Dendritic cell treated with granulocyte-macrophage colony-stimulating factor and Interleukin-4, amounts not matched to agents 40 ng/mL and 50 ng/mL, for 4 days (primary cell): ENCODE measurements at regions of chr2 and their contacts with region 1.

Region 1: DNA sequence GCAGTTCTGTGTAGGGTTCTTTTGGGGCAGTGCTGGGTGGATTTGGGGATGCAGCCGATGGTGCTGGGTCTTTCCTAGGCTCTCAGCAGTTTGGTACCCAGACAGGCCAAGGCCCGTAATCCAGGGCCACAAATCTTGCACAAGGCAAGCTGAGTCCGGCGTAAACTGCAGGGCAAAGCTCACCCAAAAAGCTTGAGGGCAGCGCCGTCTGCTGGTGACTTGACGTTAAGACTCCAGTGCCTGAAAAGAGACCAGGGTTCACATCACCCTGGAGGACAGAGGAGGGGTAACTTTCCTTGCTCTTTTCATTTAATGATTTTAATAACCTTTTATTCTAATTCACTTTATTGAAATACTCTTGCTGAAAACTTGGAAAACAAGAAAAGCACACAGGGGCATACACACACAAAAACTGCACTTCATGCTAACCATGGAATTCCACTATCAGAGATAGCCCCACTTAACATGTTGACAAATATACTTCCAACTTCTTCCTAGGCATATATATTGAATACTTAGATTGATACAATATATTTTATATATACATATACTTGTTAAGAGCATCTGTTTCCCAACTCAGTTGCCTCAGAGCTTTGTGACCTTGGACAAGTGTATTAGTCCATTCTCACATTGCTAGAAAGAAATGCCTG is 38.9 kb downstream of the CNGA3 start:
- H3K4me3 Mint-ChIP-seq: peak overlapping the region; percentile 38
- H3K27ac Mint-ChIP-seq: no peak overlapping the region
- H3K4me1 Mint-ChIP-seq: peaks cover 5% of the 10 kb centered on the region
- H3K27me3 Mint-ChIP-seq: peaks cover 42% of the 10 kb centered on the region

Region 2: GRCh38 chr2:97697252-97698235 is 687.6 kb before region 1 on chr2:
- intact Hi-C with region 1: loop called (anchors 10 kb)
- H3K4me3 Mint-ChIP-seq: peak overlapping the region; percentile 36
- H3K27ac Mint-ChIP-seq: no peak overlapping the region
- H3K4me1 Mint-ChIP-seq: peaks cover 15% of the 10 kb centered on the region
- H3K27me3 Mint-ChIP-seq: no peaks in the 10 kb centered on the region

Region 3: DNA sequence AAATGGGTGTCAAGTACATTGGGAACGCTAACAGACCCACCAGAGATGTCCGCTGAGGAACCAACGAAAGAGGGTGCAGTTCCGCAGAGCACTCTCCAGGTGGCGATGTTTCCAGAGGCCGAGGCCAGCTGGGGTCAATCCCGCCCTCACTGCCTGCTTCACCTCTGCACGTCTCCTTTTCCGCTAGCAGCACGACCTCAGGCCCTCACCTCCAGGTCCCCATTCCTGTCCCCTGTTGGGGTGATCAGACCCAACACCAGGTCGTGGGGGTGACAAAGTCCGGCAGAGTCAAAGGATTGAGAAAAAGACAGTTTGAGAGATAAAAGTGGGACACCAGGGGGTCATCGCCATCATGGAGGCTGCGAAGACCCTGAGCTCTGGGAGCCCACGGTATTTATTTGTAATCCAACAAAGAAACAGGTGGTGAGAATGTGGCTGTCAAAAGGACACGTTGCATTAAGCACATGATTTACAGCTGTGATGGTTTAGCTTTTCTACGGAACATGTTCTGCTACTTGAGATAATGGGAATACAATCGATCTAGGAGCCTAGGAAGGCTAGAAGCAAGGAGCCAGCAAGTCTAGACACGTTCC is 644.5 kb before region 1 on chr2:
- intact Hi-C with region 1: loop called (anchors 2 kb)
- H3K4me3 Mint-ChIP-seq: no peak overlapping the region
- H3K27ac Mint-ChIP-seq: no peak overlapping the region
- H3K4me1 Mint-ChIP-seq: peaks cover 10% of the 10 kb centered on the region
- H3K27me3 Mint-ChIP-seq: peaks cover 2% of the 10 kb centered on the region

Region 4: DNA sequence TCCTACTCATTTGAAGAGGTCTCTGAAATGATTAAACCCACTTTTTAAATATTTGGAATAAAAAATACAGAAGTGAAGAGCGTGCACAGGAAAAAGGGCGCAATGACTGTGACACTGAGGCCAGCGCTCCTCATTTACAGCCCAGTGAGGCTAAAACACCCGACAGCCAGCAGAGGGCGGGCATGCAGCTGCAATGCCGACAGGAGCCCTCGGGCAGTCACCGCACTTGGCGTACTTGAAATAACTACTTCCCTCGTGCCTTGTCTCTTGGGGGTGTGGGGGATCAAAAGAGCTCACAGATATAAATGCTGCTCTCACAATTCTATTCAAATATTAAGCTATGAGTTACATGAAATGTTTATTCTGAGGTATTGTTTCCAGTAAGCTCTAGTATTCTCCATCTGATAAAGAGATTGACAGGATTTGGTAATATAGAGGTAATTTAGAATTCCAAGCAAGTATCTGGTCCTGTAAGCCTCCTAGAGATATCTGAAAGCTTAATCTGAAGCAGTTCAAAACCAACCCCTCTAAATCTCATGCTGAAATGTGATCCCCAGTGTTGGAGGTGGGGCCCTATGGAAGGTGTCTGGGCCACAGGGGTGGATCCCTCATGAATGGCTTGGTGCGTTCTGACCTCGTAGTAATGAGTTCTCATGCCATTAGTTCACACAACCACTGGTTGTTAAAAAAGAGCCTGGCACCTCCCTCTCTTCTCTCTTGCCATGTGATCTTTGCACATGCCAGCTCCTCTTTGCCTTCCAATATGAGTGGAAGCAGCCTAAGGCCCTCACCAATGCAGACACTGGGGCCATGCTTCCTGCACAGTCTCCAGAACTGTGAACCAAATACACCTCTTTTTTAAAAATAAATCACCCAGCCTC is 578.2 kb before region 1 on chr2:
- intact Hi-C with region 1: loop called (anchors 1 kb)
- H3K4me3 Mint-ChIP-seq: no peak overlapping the region
- H3K27ac Mint-ChIP-seq: no peak overlapping the region
- H3K4me1 Mint-ChIP-seq: no peaks in the 10 kb centered on the region
- H3K27me3 Mint-ChIP-seq: no peaks in the 10 kb centered on the region